ENCODE measurements at regions of chr2 and their contacts with region 1.

Region 1: DNA sequence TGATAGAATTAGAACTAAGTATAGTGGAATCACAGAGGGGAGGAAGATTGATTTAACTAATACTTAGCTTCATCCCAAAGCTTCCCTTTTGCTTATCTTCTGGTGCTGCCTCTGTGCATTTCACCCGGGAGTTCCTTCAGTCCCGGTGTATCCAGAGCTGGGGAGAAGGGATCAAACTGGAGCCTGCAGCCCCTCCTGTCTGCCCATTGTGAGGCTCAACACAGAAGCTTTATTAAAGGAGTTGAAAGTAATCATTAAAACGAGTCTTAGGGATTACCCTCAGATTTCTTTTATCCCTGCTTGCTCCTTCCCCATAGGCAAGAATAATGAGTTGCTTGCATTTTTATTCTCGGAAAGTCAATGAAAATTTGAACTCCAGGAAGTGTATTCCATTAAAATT is 739.7 kb upstream of the DDX18 start:
- DNase-seq: no peak
- H3K4me3 ChIP-seq: no peak overlapping the region
- H3K27ac ChIP-seq: no peak overlapping the region
- H3K4me1 ChIP-seq: no peaks in the 10 kb centered on the region
- H3K27me3 ChIP-seq: no peaks in the 10 kb centered on the region
- CTCF ChIP-seq: no peak
- EP300 ChIP-seq: no peak
- POLR2A ChIP-seq: no peak

Region 2: DNA sequence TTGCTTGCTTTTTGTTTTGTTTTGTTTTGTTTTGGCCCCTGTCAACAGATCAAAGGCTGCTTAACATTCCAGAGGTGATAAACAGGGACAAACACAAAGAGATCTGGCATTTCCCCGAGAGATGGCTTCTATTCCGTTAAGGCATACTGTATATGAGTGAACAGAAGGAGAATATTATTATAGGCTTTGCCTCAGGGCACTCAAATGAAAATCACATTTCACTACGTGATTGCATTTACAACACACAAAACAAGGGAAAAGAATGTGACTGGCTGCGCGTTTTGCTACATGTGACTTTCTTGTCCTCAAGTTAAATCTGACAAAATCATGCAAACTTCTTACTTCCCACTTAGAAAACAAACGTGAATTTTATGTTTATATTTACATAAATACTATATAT is 298.2 kb before region 1 on chr2:
- in situ Hi-C with region 1: no loop called
- intact Hi-C with region 1: no loop called
- DNase-seq: no peak
- H3K4me3 ChIP-seq: no peak overlapping the region
- H3K27ac ChIP-seq: no peak overlapping the region
- H3K4me1 ChIP-seq: no peaks in the 10 kb centered on the region
- H3K27me3 ChIP-seq: no peaks in the 10 kb centered on the region
- CTCF ChIP-seq: no peak
- EP300 ChIP-seq: no peak
- POLR2A ChIP-seq: no peak

Region 3: GRCh38 chr2:117027646-117028045 is 47.1 kb before region 1 on chr2:
- in situ Hi-C with region 1: no loop called
- intact Hi-C with region 1: loop called (anchors 1 kb)
- DNase-seq: no peak
- H3K4me3 ChIP-seq: no peak overlapping the region
- H3K27ac ChIP-seq: no peak overlapping the region
- H3K4me1 ChIP-seq: no peaks in the 10 kb centered on the region
- H3K27me3 ChIP-seq: no peaks in the 10 kb centered on the region
- CTCF ChIP-seq: no peak
- EP300 ChIP-seq: no peak
- POLR2A ChIP-seq: no peak

Region 4: DNA sequence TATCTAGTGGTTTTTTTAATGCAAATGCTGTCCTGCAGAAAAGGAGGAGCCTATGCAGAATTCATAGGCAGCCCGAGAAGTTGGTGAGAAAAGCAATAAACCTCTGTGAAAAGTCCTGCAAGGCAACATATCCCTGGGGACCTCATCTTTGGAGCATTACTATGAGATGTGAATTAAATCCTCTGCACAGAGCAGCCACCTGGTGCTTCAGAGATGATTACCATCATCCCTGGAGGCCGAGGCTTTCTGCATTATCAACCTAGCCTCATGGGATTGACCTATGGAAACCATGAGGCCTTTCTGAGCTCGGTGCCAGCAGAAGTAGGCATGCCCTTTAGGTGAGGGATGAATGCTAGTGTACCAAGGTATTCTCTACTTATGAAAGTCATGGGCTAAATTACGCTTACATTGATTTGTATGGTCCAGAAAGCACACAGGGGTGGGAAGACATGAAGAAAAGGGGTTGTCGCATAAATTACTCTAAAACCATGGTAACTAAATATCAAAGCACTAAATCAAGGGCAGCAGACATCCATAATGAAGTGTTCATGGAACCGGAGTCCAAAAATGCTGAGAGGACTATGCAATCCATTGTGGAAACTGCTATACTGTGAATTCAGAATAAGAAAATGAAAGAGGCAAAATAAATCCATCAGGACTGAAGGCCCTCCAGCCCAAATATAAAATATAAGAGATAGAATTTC is 116.3 kb after region 1 on chr2:
- in situ Hi-C with region 1: no loop called
- intact Hi-C with region 1: no loop called
- DNase-seq: no peak
- H3K4me3 ChIP-seq: no peak overlapping the region
- H3K27ac ChIP-seq: no peak overlapping the region
- H3K4me1 ChIP-seq: no peaks in the 10 kb centered on the region
- H3K27me3 ChIP-seq: no peaks in the 10 kb centered on the region
- CTCF ChIP-seq: no peak
- EP300 ChIP-seq: no peak
- POLR2A ChIP-seq: no peak